ENCODE measurements at regions of chr9 and their contacts with region 1.

Region 1: GRCh38 chr9:33233681-33234473 is 6.1 kb upstream of the SPINK4 start:
- DNase-seq: peak; percentile 57 to 80 (median 77)
- H3K4me3 ChIP-seq: no peak overlapping the region
- H3K27ac ChIP-seq: no peak overlapping the region
- H3K4me1 ChIP-seq: no peaks in the 10 kb centered on the region
- H3K27me3 ChIP-seq: no peaks in the 10 kb centered on the region
- CTCF ChIP-seq: no peak
- POLR2A ChIP-seq: no peak

Region 2: DNA sequence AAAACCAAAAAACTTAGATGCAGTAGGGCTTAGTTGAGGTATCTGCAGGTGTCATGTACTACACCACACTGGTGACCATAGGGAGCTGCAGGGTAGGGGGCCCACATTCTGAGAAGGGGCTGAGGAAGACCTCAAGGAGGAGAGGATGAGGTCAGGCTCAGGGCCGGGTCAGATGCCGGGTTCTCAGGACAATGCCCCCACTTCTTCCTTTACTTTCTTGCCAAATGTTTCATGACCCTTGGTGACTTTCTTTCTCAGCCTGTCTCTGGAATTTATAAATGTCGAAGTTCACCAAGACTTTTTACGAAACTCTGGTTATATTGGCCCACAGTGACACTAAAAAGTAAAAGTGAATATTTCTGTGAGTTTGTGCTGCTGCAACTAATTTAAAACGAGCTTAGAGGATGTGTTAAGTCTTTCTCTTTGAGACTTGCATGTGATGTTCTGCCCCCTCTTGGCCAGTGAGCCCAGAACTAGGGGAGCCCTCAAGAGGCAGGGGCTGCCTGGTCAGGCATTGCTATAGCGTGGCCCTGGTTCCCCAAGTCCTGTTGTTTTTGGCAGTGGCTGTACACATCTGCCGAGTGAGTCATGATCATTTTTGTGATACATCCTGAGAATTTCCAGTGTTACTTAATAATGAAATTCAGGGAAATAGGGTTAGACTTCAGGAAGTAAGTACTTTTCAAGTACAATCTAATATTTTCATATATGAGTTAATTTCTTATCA is 838.2 kb before region 1 on chr9:
- intact Hi-C with region 1: loop called in 1 of 2 experiments (anchors 10 kb)
- DNase-seq: peak; percentile 44 to 82 (median 76)
- H3K4me3 ChIP-seq: no peak overlapping the region
- H3K27ac ChIP-seq: peak overlapping the region in 4 of 5 donors; percentile 61 to 83 (median 69)
- H3K4me1 ChIP-seq: peaks cover 29 to 50% of the 10 kb centered on the region in 2 donors
- H3K27me3 ChIP-seq: no peaks in the 10 kb centered on the region
- CTCF ChIP-seq: peak in 1 of 6 experiments; percentile 9
- POLR2A ChIP-seq: peak in 1 of 2 donors; percentile 31

Region 3: GRCh38 chr9:33290247-33291030 is 56.6 kb after region 1 on chr9 and contains the start of gene NFX1:
- intact Hi-C with region 1: loop called in 1 of 2 experiments (anchors 10 kb)
- DNase-seq: peak; percentile 97 to 99 (median 98)
- H3K4me3 ChIP-seq: peak within 1 kb of the TSS; percentile 66 to 95 (median 80)
- H3K27ac ChIP-seq: peak within 1 kb of the TSS; percentile 97 to 100 (median 99)
- H3K4me1 ChIP-seq: peaks cover 13 to 36% of the 10 kb centered on the region in 2 donors
- H3K27me3 ChIP-seq: no peaks in the 10 kb centered on the region
- CTCF ChIP-seq: no peak
- POLR2A ChIP-seq: peak; percentile 86 to 97
- total RNA-seq, gene NFX1: 20.8 to 44.4 (median 31.6) TPM

Region 4: GRCh38 chr9:33350310-33350709 is 116.4 kb after region 1 on chr9:
- intact Hi-C with region 1: no loop called
- DNase-seq: no peak
- H3K4me3 ChIP-seq: no peak overlapping the region
- H3K27ac ChIP-seq: peak overlapping the region in 2 of 5 donors; percentile 1 to 35
- H3K4me1 ChIP-seq: peaks cover 21 to 22% of the 10 kb centered on the region in 2 donors
- H3K27me3 ChIP-seq: no peaks in the 10 kb centered on the region
- CTCF ChIP-seq: no peak
- POLR2A ChIP-seq: no peak

Measured in adrenal gland (tissue), 19 donors.